ENCODE measurements at regions of chr11 and their contacts with region 1.

Region 1: GRCh38 chr11:72189461-72190275 is 2.3 kb upstream of the FOLR1 start:
- DNase-seq: no peak
- ATAC-seq: no peak
- H3K4me3 ChIP-seq: no peak overlapping the region
- H3K27ac ChIP-seq: no peak overlapping the region
- H3K4me1 ChIP-seq: no peaks in the 10 kb centered on the region
- CTCF ChIP-seq: no peak
- EP300 ChIP-seq: no peak
- POLR2A ChIP-seq: no peak
- RAD21 ChIP-seq: no peak

Region 2: GRCh38 chr11:72222907-72223614 is 33.4 kb after region 1 on chr11:
- CTCF ChIA-PET with region 1: interaction called, 17 read pairs
- POLR2A ChIA-PET with region 1: no interaction called
- DNase-seq: peak; percentile 53 to 92
- ATAC-seq: peak; percentile 75 to 88
- H3K4me3 ChIP-seq: peak overlapping the region; percentile 92
- H3K27ac ChIP-seq: peak overlapping the region; percentile 97 to 98
- H3K4me1 ChIP-seq: peaks cover 24% of the 10 kb centered on the region
- CTCF ChIP-seq: no peak
- EP300 ChIP-seq: no peak
- POLR2A ChIP-seq: no peak
- RAD21 ChIP-seq: no peak

Measured in A549 (cell line).